OCI-LY7 (cell line): ENCODE measurements at regions of chr3 and their contacts with region 1.

Region 1: DNA sequence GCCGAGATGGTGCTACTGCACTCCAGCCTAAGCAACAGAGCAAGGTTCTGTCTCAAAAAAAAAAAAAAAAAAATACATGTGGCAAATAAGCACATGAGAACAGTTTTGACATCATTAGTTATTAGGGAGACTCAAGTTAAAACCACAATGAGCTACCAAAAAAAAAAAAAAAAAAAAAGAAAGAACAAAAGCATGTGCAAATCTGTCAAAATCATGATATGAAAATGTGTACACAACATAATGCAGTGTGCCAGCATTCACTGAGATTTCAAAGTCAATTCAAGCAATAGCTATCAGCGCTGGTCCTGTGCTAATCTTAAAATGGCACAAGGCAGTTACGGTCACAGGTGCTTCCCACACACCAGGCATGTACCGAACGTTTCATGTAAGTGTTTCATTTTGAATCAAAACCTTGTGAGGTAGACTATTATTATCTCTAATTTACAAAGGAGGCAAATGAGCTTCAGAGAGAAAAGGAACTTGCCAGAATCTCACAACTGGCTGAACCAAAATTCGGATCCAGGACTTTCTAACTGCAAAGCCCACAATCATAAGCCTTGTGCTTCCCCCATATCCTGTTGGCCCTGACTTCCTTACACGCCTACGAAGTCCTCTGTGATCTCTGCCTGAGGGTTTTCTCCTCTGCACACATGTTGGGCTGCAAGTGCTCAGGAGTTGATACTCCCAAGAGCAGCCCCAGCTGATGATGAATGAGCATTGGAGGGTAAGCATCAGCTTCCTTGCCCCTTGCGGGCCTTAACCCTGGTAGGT is 200.1 kb upstream of the PROK2 start:
- DNase-seq: peak; percentile 87
- H3K4me3 ChIP-seq: peak overlapping the region; percentile 15
- H3K27ac ChIP-seq: peak overlapping the region; percentile 94
- H3K4me1 ChIP-seq: peaks cover 54% of the 10 kb centered on the region
- CTCF ChIP-seq: no peak

Region 2: DNA sequence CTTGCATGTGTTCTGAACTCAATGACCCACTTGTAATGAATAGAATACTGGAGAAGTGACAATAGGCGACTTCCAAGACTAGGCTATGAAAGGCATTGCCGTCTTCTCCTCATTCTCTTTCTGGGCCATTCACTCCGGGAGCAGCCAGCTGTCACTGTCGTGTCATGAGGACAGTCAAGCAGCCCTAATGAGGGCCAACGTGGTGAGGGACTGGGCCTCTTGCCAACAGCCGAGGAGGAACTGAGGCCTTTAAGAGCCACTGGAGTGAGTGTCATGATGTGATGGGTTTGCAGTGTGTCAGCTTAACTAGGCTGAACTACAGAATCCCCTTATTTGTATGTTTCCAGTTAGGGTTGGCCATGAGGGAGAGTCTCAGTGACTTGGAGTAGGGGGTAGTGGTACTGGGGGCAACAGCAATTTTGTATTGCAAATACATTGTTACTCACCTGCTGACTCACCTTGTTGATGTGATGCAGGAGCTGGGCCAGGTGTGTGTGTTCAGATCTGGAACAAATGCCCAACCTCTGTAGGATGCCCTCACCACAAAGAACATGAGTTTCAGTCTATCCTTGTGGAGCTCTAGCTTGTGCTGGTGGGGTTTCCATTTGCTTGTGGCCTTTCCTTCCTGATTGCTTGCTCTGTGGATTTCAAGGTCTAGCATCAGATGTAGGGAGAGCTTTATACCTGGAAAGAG is 11.5 kb before region 1 on chr3:
- CTCF ChIA-PET with region 1: interaction called, 7 read pairs
- POLR2A ChIA-PET with region 1: interaction called, 31 read pairs
- intact Hi-C with region 1: no loop called
- DNase-seq: no peak
- H3K4me3 ChIP-seq: no peak overlapping the region
- H3K27ac ChIP-seq: no peak overlapping the region
- H3K4me1 ChIP-seq: peaks cover 34% of the 10 kb centered on the region
- CTCF ChIP-seq: no peak

Region 3: DNA sequence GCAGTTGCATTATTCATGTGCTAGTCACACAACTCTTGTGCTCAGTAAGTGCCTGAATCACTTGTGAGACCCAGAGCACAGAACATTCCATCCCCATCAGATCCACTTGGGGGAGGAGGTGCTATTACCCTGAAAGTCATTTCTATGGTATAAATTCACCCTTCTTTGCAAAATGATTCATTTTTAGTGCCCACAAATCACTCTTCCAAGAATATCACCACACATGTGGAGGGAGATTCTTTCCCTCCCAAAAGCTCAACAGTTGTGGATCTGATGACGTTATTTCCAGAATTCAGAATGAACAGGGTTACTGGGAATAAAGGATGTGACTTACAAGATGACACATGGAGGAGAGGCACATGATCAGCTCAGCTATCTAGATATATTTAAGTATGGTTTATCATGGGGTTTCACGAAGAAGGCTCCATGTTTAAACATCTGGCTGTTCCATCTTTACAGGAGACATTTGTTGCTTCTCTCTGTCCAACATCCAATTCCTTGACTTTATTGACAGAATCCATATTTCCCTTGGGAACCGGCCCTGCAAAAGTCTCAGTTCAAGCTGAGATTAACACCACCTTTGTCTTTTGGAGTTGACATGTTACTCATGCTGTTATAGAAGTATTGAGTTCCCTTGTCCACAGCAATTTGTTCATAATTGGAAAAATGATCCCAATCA is 14.1 kb after region 1 on chr3:
- CTCF ChIA-PET with region 1: interaction called, 5 read pairs
- POLR2A ChIA-PET with region 1: interaction called, 12 read pairs
- intact Hi-C with region 1: no loop called
- DNase-seq: no peak
- H3K4me3 ChIP-seq: no peak overlapping the region
- H3K27ac ChIP-seq: no peak overlapping the region
- H3K4me1 ChIP-seq: no peaks in the 10 kb centered on the region
- CTCF ChIP-seq: no peak

Region 4: DNA sequence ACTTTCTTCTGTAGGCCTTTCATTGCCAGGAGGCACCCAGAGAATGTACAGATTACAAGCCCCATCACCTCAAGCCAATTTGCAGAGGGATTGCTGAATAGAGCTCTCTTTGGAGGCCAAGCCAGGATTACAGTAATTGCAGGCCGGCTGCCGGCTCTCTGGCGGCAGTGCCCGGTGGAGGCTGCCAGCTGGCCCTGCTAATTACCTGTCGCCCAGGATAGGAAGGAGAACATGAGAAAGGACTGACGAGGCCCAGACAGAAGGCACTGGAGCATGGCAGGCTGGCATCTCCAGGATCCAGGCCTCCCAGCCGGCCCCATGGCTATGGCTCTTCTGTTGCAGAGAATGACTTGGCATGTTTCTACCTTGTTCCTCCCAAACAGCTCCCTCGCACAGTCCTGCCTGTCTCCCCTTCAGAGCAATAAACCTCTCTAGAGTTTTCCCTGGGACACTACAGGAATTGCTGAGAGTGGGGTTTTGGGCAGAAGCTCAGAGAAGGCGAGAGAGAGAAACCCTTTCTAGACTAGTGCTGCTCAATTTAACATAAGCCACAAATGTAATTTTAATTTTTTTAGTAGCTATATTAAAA is 73.6 kb after region 1 on chr3:
- CTCF ChIA-PET with region 1: no interaction called
- POLR2A ChIA-PET with region 1: no interaction called
- intact Hi-C with region 1: no loop called
- DNase-seq: no peak
- H3K4me3 ChIP-seq: no peak overlapping the region
- H3K27ac ChIP-seq: no peak overlapping the region
- H3K4me1 ChIP-seq: no peaks in the 10 kb centered on the region
- CTCF ChIP-seq: no peak

Region 5: DNA sequence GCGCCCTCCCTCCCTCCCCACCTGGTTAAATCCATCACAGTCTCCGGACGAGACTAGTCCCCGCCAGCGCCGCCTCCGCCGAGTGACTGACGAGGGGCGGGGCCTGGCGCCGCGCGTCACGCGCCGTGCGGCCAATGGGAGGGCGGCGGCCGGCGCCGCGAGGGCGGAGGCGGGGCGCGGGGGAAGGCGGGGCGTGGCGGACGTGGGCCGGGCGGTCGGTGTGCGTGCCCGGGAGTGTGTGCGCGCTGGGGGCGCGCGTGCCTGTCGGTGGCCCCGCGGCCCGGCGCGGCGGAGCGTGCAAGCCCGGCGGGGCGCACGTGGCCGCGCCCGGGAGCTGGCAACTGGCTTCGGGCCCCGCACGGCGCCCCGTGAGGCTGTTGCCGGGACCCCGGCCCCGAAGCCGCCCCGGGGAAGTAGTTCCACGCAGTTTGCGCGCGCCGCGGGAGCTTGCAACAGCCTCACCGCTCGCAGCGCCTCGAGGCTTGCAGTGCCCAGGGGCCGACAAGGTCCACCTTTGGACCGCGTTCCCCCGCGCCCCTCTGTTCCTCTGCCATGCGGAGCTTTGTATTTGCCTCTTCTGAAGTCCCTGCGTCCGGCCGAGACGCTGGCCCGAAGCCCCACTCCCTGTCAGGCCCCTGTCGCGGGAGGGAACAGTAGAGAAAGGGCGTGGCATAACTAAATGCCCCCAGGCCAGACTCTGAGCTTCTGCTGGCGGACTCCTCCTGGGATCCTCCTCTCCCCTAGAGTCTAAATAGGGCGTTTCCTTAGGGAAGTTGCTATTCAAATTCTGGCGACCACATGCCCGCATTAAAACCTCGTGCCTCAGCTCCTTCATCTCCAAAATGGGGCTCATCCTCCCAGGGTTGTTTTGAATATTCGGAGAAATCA is 462.3 kb after region 1 on chr3:
- CTCF ChIA-PET with region 1: no interaction called
- POLR2A ChIA-PET with region 1: interaction called, 4 read pairs
- intact Hi-C with region 1: loop called (anchors 10 kb)
- DNase-seq: peak; percentile 92
- H3K4me3 ChIP-seq: peak overlapping the region; percentile 86
- H3K27ac ChIP-seq: no peak overlapping the region
- H3K4me1 ChIP-seq: peaks cover 42% of the 10 kb centered on the region
- CTCF ChIP-seq: no peak